Prostate gland (tissue), 2 donors: ENCODE measurements at regions of chr1 and their contacts with region 1.

Region 1: GRCh38 chr1:70205434-70206118 is at the start of gene LRRC40:
- DNase-seq: peak; percentile 95
- H3K4me3 ChIP-seq: peak within 1 kb of the TSS; percentile 59 to 91
- H3K27ac ChIP-seq: peak within 1 kb of the TSS; percentile 82 to 84
- H3K4me1 ChIP-seq: no peaks in the 10 kb centered on the region
- H3K27me3 ChIP-seq: no peaks in the 10 kb centered on the region
- CTCF ChIP-seq: no peak
- POLR2A ChIP-seq: peak; percentile 71
- total RNA-seq, gene LRRC40: 10.7 to 18.6 TPM

Region 2: GRCh38 chr1:70134148-70134547 is 71.4 kb before region 1 on chr1:
- intact Hi-C with region 1: loop called (anchors 2 kb)
- DNase-seq: no peak
- H3K4me3 ChIP-seq: no peak overlapping the region
- H3K27ac ChIP-seq: no peak overlapping the region
- H3K4me1 ChIP-seq: no peaks in the 10 kb centered on the region
- H3K27me3 ChIP-seq: no peaks in the 10 kb centered on the region
- CTCF ChIP-seq: no peak
- POLR2A ChIP-seq: no peak